WTC11 (cell line): ENCODE measurements at regions of chr16 and their contacts with region 1.

Region 1: GRCh38 chr16:58025351-58026138 is at the start of gene MMP15:
- DNase-seq: peak; percentile 98
- ATAC-seq: peak; percentile 61
- H3K4me3 Mint-ChIP-seq: peak within 1 kb of the TSS; percentile 82
- H3K27ac Mint-ChIP-seq: peak within 1 kb of the TSS; percentile 95
- H3K4me1 Mint-ChIP-seq: peaks cover 54% of the 10 kb centered on the region
- H3K27me3 Mint-ChIP-seq: peaks cover 10% of the 10 kb centered on the region
- CTCF ChIP-seq: no peak
- total RNA-seq, gene MMP15: 55.5 to 60.7 TPM (median 58.2 TPM) in 3 replicates

Region 2: DNA sequence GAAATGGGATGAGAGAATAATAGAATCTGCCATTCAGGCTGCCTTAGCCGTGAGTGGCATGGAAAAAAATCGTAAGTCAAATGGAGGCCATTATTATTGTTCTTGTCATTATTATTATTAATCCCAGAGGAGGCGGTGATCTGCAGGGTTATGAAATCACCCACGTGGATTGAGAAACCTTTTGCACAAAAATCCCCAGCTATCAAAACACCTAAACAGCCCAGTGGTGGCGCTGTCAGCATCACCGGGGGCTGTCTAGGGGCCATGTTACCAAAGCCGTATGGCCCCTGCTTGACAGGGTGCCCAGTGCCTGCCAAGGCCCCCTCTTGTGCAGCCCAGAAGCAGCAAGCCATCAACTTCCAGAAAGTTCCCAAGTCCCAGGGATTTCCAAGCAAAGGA is 79.8 kb before region 1 on chr16:
- CTCF ChIA-PET with region 1: no interaction called
- POLR2A ChIA-PET with region 1: no interaction called
- DNase-seq: no peak
- ATAC-seq: peak; percentile 68
- H3K4me3 Mint-ChIP-seq: no peak overlapping the region
- H3K27ac Mint-ChIP-seq: no peak overlapping the region
- H3K4me1 Mint-ChIP-seq: peaks cover 6% of the 10 kb centered on the region; the same call in 1 of the 2 replicates
- H3K27me3 Mint-ChIP-seq: no peaks in the 10 kb centered on the region
- CTCF ChIP-seq: peak; percentile 22; the same call in 1 of the 2 replicates

Region 3: GRCh38 chr16:58000706-58001676 is 24.6 kb before region 1 on chr16 and contains the start of gene USB1:
- CTCF ChIA-PET with region 1: interaction called, 10 read pairs
- POLR2A ChIA-PET with region 1: interaction called, 4 read pairs
- DNase-seq: peak; percentile 87
- ATAC-seq: peak; percentile 85
- H3K4me3 Mint-ChIP-seq: peak within 1 kb of the TSS; percentile 83
- H3K27ac Mint-ChIP-seq: peak within 1 kb of the TSS; percentile 70
- H3K4me1 Mint-ChIP-seq: peaks cover 23% of the 10 kb centered on the region
- H3K27me3 Mint-ChIP-seq: no peaks in the 10 kb centered on the region
- CTCF ChIP-seq: no peak; the same call in 1 of the 2 replicates
- total RNA-seq, gene USB1: 67.1 to 75.2 TPM (median 69.6 TPM) in 3 replicates

Region 4: DNA sequence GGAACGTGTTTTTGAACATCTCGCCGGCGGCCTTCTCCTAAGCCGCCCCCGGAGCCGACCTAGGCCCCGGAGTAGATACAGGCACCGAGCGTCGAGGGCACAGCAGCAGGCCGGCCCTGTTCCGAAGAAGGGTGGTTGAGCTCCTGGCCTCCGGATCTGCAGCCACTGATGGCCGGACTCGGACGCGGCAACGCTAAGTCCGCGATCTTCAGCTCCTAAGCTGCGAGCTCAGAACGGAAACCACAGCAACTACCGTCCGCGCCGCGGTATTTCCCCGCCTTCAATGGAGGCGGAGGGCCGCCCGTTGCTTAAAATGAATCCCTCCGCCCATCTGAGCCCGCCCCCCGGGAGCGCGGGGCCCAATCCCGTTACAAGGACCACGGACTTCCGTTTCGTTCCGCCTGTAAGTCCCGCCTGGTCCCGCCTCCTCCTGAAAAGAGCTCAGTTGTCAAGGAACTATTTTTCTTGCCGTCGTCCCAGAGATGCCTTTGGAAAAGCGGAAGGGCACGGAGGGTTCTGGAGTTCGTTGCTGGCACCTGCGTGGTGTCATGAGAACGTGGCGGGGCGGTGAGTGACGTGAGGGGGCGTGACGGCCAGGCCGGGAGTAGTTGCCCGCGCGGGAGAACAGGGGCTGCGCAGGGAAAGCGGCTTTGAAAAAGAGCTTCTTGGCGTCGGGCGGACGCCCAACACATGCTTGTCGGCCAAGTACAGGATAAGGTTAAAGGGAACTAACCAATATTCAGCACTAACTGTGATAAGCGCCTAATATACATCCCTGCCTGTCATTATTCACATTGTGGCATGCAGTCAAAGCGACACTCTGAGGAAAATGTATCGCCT is 103.8 kb after region 1 on chr16 and contains the start of gene CFAP20:
- CTCF ChIA-PET with region 1: interaction called, 18 read pairs
- POLR2A ChIA-PET with region 1: interaction called, 29 read pairs
- DNase-seq: peak; percentile 97
- ATAC-seq: peak; percentile 94
- H3K4me3 Mint-ChIP-seq: peak within 1 kb of the TSS; percentile 87
- H3K27ac Mint-ChIP-seq: peak within 1 kb of the TSS; percentile 96
- H3K4me1 Mint-ChIP-seq: peaks cover 29% of the 10 kb centered on the region
- H3K27me3 Mint-ChIP-seq: no peaks in the 10 kb centered on the region; the same call in 1 of the 2 replicates
- CTCF ChIP-seq: no peak
- total RNA-seq, gene CFAP20: 41.9 to 46.9 TPM (median 42.4 TPM) in 3 replicates